ENCODE measurements at regions of chr5 and their contacts with region 1.

Region 1: GRCh38 chr5:1344975-1345838 is at the start of gene CLPTM1L:
- DNase-seq: peak; percentile 71 to 96 (median 88)
- ATAC-seq: peak; percentile 95
- H3K4me3 ChIP-seq: peak within 1 kb of the TSS; percentile 81 to 98
- H3K4me3 Mint-ChIP-seq: peak within 1 kb of the TSS; percentile 85
- H3K27ac ChIP-seq: peak within 1 kb of the TSS; percentile 82 to 89
- H3K27ac Mint-ChIP-seq: peak within 1 kb of the TSS; percentile 81
- H3K4me1 ChIP-seq: peaks cover 23% of the 10 kb centered on the region
- H3K4me1 Mint-ChIP-seq: peaks cover 28% of the 10 kb centered on the region
- H3K27me3 ChIP-seq: no peaks in the 10 kb centered on the region
- H3K27me3 Mint-ChIP-seq: no peaks in the 10 kb centered on the region
- CTCF ChIP-seq: no peak
- total RNA-seq, gene CLPTM1L: 56.8 to 58.9 TPM

Region 2: DNA sequence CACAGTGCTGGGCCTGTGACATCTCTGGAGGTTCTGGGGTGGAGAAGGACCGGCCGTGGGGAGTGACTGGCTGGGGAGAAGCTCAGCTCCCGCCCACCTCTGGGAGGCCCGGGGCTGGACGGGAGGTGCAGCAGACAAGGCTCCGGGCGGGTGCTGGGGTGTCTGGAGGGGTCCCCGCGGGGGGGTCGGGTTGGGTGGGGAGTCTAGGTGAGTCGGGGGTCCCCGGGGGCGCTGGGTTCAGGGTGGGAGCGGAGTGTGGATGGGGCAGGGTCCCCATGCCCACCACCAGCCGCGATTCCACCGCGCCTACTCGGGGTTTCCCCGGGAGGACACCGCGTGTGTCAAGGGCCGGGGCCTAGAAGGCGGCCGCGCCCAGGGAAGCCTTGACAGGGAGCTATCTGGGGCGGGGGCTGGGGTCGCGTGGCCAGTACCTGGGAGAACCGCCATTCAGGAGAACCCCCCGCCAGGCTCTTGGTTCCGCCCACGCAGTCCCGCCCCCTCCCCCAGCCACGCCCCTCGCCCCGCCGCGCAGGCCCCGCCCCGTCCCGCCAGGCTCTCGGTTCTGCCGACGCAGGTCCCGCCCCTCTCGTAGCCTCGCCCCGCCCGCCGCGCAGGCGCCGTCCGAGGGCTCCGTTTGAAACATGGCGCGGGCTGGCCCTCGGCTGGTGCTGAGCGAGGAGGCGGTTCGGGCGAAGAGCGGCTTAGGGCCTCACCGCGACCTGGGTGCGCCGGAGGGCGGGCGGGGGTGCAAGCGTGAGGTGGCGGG is 733.3 kb before region 1 on chr5 and contains the start of gene CEP72:
- CTCF ChIA-PET with region 1: no interaction called
- POLR2A ChIA-PET with region 1: no interaction called
- intact Hi-C with region 1: loop called in 1 of 2 experiments (anchors 10 kb)
- DNase-seq: peak; percentile 84 to 96 (median 94)
- ATAC-seq: peak; percentile 97
- H3K4me3 ChIP-seq: peak within 1 kb of the TSS; percentile 71 to 88
- H3K4me3 Mint-ChIP-seq: peak within 1 kb of the TSS; percentile 88
- H3K27ac ChIP-seq: peak within 1 kb of the TSS; percentile 17 to 49
- H3K27ac Mint-ChIP-seq: peak within 1 kb of the TSS; percentile 82
- H3K4me1 ChIP-seq: peaks cover 19% of the 10 kb centered on the region
- H3K4me1 Mint-ChIP-seq: peaks cover 43% of the 10 kb centered on the region
- H3K27me3 ChIP-seq: no peaks in the 10 kb centered on the region
- H3K27me3 Mint-ChIP-seq: peaks cover 10% of the 10 kb centered on the region
- CTCF ChIP-seq: no peak
- total RNA-seq, gene CEP72: 7.4 to 8.9 TPM

Region 3: GRCh38 chr5:1255081-1255561 is 90.1 kb before region 1 on chr5:
- CTCF ChIA-PET with region 1: interaction called, 3 read pairs
- POLR2A ChIA-PET with region 1: no interaction called
- intact Hi-C with region 1: loop called (anchors 1 to 5 kb)
- DNase-seq: peak in 8 of 9 experiments; percentile 31 to 75 (median 58)
- ATAC-seq: peak; percentile 91
- H3K4me3 ChIP-seq: peak overlapping the region in 1 of 2 experiments; percentile 17
- H3K4me3 Mint-ChIP-seq: peak overlapping the region; percentile 75
- H3K27ac ChIP-seq: no peak overlapping the region
- H3K27ac Mint-ChIP-seq: peak overlapping the region; percentile 25
- H3K4me1 ChIP-seq: peaks cover 18% of the 10 kb centered on the region
- H3K4me1 Mint-ChIP-seq: peaks cover 18% of the 10 kb centered on the region
- H3K27me3 ChIP-seq: no peaks in the 10 kb centered on the region
- H3K27me3 Mint-ChIP-seq: no peaks in the 10 kb centered on the region
- CTCF ChIP-seq: no peak

Region 4: DNA sequence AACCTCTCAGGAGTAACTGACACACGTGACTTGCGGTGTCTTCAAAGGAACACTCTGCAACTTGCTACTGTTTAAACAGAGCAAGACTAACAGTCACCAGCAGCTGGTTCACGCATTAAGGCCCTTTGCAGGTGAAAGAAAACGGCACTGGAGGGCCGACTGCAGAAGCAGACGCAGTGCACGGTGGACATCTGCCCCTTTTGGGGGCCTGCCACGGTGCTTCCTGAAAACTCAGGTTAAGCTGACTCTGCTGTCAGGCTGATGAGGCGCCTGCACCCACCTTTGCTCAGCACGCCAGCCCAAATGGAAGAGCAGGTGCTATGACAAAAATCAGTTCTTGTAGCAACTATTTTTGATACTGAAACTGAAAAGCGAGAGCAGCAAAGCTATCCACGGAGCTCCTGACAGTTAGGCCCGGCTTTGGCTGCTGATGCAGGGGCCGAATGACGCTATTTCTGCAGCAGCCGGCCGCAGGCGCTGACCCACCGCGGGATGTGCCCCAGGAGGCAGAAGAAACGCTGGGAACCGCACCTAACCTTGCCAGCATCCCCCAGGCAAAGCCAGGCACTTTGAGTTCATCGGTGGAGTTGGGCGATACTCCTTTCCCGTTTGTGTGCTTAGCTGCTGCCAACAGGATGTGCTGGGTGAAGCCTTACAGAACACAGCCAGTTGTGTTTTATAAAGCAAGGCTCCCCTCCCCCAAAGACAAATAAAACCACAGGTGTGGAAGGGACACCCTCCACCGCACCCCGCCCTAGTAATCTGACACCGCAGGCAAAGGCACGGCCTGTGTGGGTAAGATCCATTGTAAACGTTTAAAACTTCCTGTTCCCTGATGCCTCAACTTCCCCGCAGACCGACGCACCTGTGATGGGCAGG is 29.3 kb before region 1 on chr5:
- CTCF ChIA-PET with region 1: interaction called, 5 read pairs
- POLR2A ChIA-PET with region 1: interaction called, 5 read pairs
- intact Hi-C with region 1: loop called (anchors 1 kb)
- DNase-seq: peak in 8 of 9 experiments; percentile 34 to 83 (median 70)
- ATAC-seq: peak; percentile 65
- H3K4me3 ChIP-seq: peak overlapping the region; percentile 40 to 54
- H3K4me3 Mint-ChIP-seq: peak overlapping the region; percentile 82
- H3K27ac ChIP-seq: peak overlapping the region; percentile 45
- H3K27ac Mint-ChIP-seq: peak overlapping the region; percentile 94
- H3K4me1 ChIP-seq: peaks cover 58% of the 10 kb centered on the region
- H3K4me1 Mint-ChIP-seq: peaks cover 61% of the 10 kb centered on the region
- H3K27me3 ChIP-seq: no peaks in the 10 kb centered on the region
- H3K27me3 Mint-ChIP-seq: no peaks in the 10 kb centered on the region
- CTCF ChIP-seq: no peak

Region 5: GRCh38 chr5:1385395-1386273 is 40.4 kb after region 1 on chr5:
- CTCF ChIA-PET with region 1: interaction called, 11 read pairs
- POLR2A ChIA-PET with region 1: interaction called, 24 read pairs
- intact Hi-C with region 1: loop called (anchors 1 kb)
- DNase-seq: peak; percentile 73 to 93 (median 88)
- ATAC-seq: peak; percentile 77
- H3K4me3 ChIP-seq: peak overlapping the region; percentile 66 to 73
- H3K4me3 Mint-ChIP-seq: peak overlapping the region; percentile 97
- H3K27ac ChIP-seq: peak overlapping the region; percentile 94 to 96
- H3K27ac Mint-ChIP-seq: peak overlapping the region; percentile 100
- H3K4me1 ChIP-seq: peaks cover 17% of the 10 kb centered on the region
- H3K4me1 Mint-ChIP-seq: peaks cover 30% of the 10 kb centered on the region
- H3K27me3 ChIP-seq: no peaks in the 10 kb centered on the region
- H3K27me3 Mint-ChIP-seq: no peaks in the 10 kb centered on the region
- CTCF ChIP-seq: no peak

Region 6: GRCh38 chr5:1401536-1402138 is 56.4 kb after region 1 on chr5:
- CTCF ChIA-PET with region 1: no interaction called
- POLR2A ChIA-PET with region 1: no interaction called
- intact Hi-C with region 1: no loop called
- DNase-seq: no peak
- ATAC-seq: no peak
- H3K4me3 ChIP-seq: no peak overlapping the region
- H3K4me3 Mint-ChIP-seq: no peak overlapping the region
- H3K27ac ChIP-seq: no peak overlapping the region
- H3K27ac Mint-ChIP-seq: no peak overlapping the region
- H3K4me1 ChIP-seq: no peaks in the 10 kb centered on the region
- H3K4me1 Mint-ChIP-seq: no peaks in the 10 kb centered on the region
- H3K27me3 ChIP-seq: no peaks in the 10 kb centered on the region
- H3K27me3 Mint-ChIP-seq: peaks cover 19% of the 10 kb centered on the region
- CTCF ChIP-seq: no peak

Region 7: DNA sequence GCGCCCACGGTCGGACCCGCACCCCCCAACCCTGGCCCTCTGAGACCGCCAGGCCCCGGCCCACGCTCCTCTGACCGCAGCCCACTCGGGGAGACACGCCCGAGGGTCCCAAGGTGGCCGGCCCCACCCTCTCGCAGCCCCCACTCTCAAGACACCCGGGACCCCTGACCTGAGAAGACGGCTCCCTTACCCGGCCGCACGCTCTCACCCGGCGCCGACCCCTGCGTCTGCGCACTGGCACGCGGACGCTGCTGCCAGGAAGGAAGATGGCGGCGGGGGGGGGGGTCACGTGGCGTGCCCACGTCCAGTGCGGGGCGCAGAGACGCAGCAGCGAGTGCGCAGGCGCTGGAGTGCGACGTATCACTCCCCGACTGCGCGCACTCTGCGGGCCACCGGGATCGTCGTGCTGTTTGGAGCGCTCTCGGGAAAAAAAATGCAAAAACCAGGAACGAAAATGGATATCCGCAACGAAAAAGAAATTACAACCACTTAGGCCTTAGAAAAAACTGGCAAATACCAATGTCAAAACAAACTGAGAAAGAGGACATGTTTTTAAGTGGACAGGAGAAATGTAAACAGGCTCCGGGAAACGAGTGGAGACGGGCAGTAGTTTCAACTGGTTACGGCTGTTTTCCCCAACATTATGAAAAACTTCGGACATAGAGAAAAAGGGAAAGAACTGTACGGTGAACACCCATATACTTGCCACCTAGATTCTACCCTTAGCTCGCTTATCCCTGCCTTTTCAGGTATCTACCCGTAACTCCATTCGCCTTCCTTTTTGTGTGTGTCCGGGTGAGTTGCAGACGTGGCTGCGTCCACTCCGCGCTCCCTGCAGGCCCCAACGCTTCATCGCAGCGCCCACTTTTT is 454.6 kb after region 1 on chr5 and contains the start of gene MRPL36:
- CTCF ChIA-PET with region 1: no interaction called
- POLR2A ChIA-PET with region 1: no interaction called
- intact Hi-C with region 1: loop called in 1 of 2 experiments (anchors 10 kb)
- DNase-seq: peak; percentile 84 to 96 (median 94)
- ATAC-seq: peak; percentile 70
- H3K4me3 ChIP-seq: peak within 1 kb of the TSS; percentile 82 to 94
- H3K4me3 Mint-ChIP-seq: peak within 1 kb of the TSS; percentile 99
- H3K27ac ChIP-seq: peak within 1 kb of the TSS; percentile 70 to 80
- H3K27ac Mint-ChIP-seq: peak within 1 kb of the TSS; percentile 99
- H3K4me1 ChIP-seq: peaks cover 24% of the 10 kb centered on the region
- H3K4me1 Mint-ChIP-seq: peaks cover 68% of the 10 kb centered on the region
- H3K27me3 ChIP-seq: no peaks in the 10 kb centered on the region
- H3K27me3 Mint-ChIP-seq: no peaks in the 10 kb centered on the region
- CTCF ChIP-seq: no peak
- total RNA-seq, gene MRPL36: 11.6 to 12.7 TPM

Measured in CD8-positive, alpha-beta T cell (primary cell).